Activated naive CD4-positive, alpha-beta T cell treated with anti-CD3 and anti-CD28 coated beads for 36 hours (primary cell): ENCODE measurements at regions of chr6 and their contacts with region 1.

Region 1: GRCh38 chr6:33410050-33410710 is 634 bp upstream of the PHF1 start:
- DNase-seq: peak; percentile 98
- H3K4me3 Mint-ChIP-seq: peak overlapping the region; percentile 87
- H3K27ac Mint-ChIP-seq: peak overlapping the region; percentile 93
- H3K4me1 Mint-ChIP-seq: peaks cover 39% of the 10 kb centered on the region
- H3K27me3 Mint-ChIP-seq: no peaks in the 10 kb centered on the region

Region 2: DNA sequence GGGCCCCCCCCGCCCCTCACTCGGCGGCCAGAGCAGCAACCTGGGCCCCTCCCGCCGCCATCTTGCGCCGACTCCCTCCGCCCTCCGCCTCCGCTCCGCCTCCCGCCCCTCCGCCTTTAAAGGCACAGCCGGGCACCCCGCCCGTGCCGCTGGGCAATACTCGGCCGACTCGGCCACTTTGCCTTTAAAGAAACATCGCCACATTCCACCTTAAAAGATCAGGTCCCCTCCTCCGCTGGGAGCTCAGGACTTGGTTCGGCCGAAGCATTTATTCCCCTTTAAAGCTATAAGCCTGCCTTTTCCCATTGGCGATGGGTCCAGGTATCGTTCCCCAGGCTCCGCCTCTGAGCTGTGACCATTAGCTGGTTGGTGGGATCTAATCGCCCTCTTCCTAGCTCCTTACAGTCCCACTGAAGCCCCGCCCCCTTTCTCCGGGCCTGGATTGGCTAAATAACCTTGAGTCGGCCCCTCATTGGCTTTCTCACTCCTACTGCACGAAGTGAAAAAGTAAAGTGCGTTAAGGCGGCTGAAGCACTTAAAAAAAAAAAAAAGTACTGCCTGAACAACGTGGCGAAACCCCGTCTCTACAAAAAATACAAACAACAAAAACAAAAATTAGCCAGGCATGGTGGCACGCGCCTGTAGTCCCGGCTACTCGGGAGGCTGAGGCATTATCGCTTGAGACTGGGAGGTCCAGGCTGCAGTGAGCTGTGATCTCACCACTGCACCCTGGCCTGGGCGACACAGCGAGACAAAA is 92.3 kb before region 1 on chr6 and contains the start of gene ZBTB22:
- CTCF ChIA-PET with region 1: no interaction called
- intact Hi-C with region 1: loop called (anchors 1 kb)
- DNase-seq: peak; percentile 97
- H3K4me3 Mint-ChIP-seq: peak within 1 kb of the TSS; percentile 94
- H3K27ac Mint-ChIP-seq: peak within 1 kb of the TSS; percentile 95
- H3K4me1 Mint-ChIP-seq: peaks cover 72% of the 10 kb centered on the region
- H3K27me3 Mint-ChIP-seq: no peaks in the 10 kb centered on the region
- total RNA-seq, gene ZBTB22: 8.8 to 9.0 TPM

Region 3: GRCh38 chr6:33323623-33323948 is 86.6 kb before region 1 on chr6:
- CTCF ChIA-PET with region 1: no interaction called
- intact Hi-C with region 1: loop called (anchors 1 kb)
- DNase-seq: no peak
- H3K4me3 Mint-ChIP-seq: peak overlapping the region; percentile 95
- H3K27ac Mint-ChIP-seq: peak overlapping the region; percentile 98
- H3K4me1 Mint-ChIP-seq: peaks cover 43% of the 10 kb centered on the region
- H3K27me3 Mint-ChIP-seq: no peaks in the 10 kb centered on the region

Region 4: DNA sequence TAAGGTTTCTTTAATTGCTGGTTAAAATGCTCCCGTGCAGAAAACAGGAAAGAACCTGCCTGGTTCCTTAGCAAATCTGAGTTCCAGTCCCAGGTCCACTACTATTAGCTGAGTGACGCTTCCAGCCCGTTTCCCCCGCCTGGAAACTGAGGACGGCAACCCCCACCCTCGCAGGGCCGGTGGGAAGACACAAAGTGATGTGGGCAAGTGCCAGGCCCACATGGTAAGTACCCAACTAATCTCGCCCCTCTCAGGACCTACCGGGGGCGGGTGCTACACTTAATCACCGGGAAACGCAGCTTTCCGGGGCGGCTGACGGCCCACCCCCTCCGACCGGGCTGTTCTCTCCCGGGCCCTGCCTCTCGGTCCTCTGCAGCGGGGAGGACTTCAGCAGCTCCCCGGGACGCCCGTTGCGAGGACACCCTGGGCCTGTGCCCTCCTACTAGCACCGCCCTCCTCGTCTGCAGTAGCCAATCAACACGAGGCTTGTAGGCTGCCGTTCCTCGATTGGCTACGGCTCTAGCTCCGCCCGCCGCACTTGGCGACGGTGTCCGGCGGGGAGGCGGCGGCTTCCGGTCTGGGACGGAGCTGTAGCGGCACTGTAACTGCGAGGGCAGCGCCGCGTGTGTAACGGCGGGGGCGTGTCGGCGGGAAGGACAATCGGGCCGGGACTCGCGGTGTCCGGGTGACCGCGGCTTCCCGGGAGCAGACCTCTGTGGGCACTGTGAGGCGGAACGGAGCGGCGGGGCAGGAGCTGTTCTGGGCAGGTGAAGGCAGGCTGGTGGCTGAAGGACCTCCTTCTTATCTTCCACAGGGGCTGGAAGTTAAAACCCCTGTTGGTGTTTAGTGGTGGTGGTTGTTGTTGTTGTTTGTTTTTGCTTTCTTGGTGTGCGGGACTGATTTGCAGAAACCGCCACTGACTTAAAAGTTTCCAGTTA is 44.1 kb after region 1 on chr6 and contains the start of gene ZBTB9:
- CTCF ChIA-PET with region 1: no interaction called
- intact Hi-C with region 1: no loop called
- DNase-seq: peak; percentile 96
- H3K4me3 Mint-ChIP-seq: peak within 1 kb of the TSS; percentile 87
- H3K27ac Mint-ChIP-seq: peak within 1 kb of the TSS; percentile 85
- H3K4me1 Mint-ChIP-seq: peaks cover 47% of the 10 kb centered on the region
- H3K27me3 Mint-ChIP-seq: no peaks in the 10 kb centered on the region
- total RNA-seq, gene ZBTB9: 5.0 to 6.5 TPM

Region 5: GRCh38 chr6:33620856-33621710 is 210.9 kb after region 1 on chr6 and contains the start of gene ITPR3:
- CTCF ChIA-PET with region 1: no interaction called
- intact Hi-C with region 1: no loop called
- DNase-seq: peak; percentile 77
- H3K4me3 Mint-ChIP-seq: peak within 1 kb of the TSS; percentile 89
- H3K27ac Mint-ChIP-seq: peak within 1 kb of the TSS; percentile 78
- H3K4me1 Mint-ChIP-seq: peaks cover 53% of the 10 kb centered on the region
- H3K27me3 Mint-ChIP-seq: no peaks in the 10 kb centered on the region
- total RNA-seq, gene ITPR3: 34.8 to 35.1 TPM